Activated CD4-positive, alpha-beta T cell treated with anti-CD3 and anti-CD28 coated beads for 36 hours (primary cell): ENCODE measurements at regions of chr20 and their contacts with region 1.

Region 1: GRCh38 chr20:58236612-58237330 is 8.3 kb upstream of the ANKRD60 start:
- DNase-seq: peak; percentile 93
- ATAC-seq: peak; percentile 90
- H3K4me3 Mint-ChIP-seq: peak overlapping the region; percentile 81
- H3K27ac Mint-ChIP-seq: peak overlapping the region; percentile 92
- H3K4me1 Mint-ChIP-seq: peaks cover 32% of the 10 kb centered on the region
- H3K27me3 Mint-ChIP-seq: no peaks in the 10 kb centered on the region

Region 2: GRCh38 chr20:58192567-58192966 is 44.2 kb before region 1 on chr20:
- CTCF ChIA-PET with region 1: no interaction called
- POLR2A ChIA-PET with region 1: no interaction called
- intact Hi-C with region 1: no loop called
- DNase-seq: peak; percentile 64
- ATAC-seq: no peak
- H3K4me3 Mint-ChIP-seq: no peak overlapping the region
- H3K27ac Mint-ChIP-seq: no peak overlapping the region
- H3K4me1 Mint-ChIP-seq: no peaks in the 10 kb centered on the region
- H3K27me3 Mint-ChIP-seq: peaks cover 6% of the 10 kb centered on the region

Region 3: GRCh38 chr20:58224974-58225373 is 11.8 kb before region 1 on chr20:
- CTCF ChIA-PET with region 1: interaction called, 18 read pairs
- POLR2A ChIA-PET with region 1: interaction called, 3 read pairs
- intact Hi-C with region 1: no loop called
- DNase-seq: no peak
- ATAC-seq: no peak
- H3K4me3 Mint-ChIP-seq: no peak overlapping the region
- H3K27ac Mint-ChIP-seq: no peak overlapping the region
- H3K4me1 Mint-ChIP-seq: peaks cover 31% of the 10 kb centered on the region
- H3K27me3 Mint-ChIP-seq: peaks cover 53% of the 10 kb centered on the region

Region 4: GRCh38 chr20:58407966-58408557 is 171.3 kb after region 1 on chr20:
- CTCF ChIA-PET with region 1: interaction called, 4 read pairs
- POLR2A ChIA-PET with region 1: no interaction called
- intact Hi-C with region 1: loop called in 1 of 2 experiments (anchors 5 kb)
- DNase-seq: peak; percentile 54
- ATAC-seq: peak; percentile 90
- H3K4me3 Mint-ChIP-seq: peak overlapping the region; percentile 36
- H3K27ac Mint-ChIP-seq: peak overlapping the region; percentile 87
- H3K4me1 Mint-ChIP-seq: peaks cover 32% of the 10 kb centered on the region
- H3K27me3 Mint-ChIP-seq: no peaks in the 10 kb centered on the region

Region 5: DNA sequence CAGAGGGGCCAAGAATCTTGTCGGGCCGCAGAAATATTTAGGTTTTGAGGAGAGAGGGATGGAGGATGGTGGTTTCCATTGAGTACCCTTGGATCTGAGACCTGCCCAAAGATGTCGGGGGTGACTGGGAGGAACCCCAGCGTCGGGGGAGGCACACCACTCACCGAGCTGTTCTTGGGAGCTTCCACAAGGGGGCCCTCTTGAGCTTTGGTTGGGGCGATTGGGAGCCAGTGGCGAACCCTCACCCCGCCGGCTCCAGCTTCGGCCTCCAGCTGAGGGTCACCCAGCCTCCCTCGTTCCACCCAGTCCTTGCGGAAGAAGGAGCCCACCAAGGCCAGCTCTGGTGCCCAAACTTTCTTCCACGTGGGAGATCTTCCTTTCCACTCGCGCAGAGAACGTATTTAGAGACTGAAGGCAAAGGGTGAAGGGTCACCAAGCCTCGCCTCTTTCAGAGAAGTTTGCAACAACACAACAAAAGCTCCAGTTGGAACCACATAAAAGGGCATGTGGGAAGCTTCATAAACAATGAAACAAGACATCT is 244.8 kb after region 1 on chr20:
- CTCF ChIA-PET with region 1: no interaction called
- POLR2A ChIA-PET with region 1: no interaction called
- intact Hi-C with region 1: loop called in 1 of 2 experiments (anchors 1 kb)
- DNase-seq: peak; percentile 82
- ATAC-seq: peak; percentile 78
- H3K4me3 Mint-ChIP-seq: no peak overlapping the region
- H3K27ac Mint-ChIP-seq: no peak overlapping the region
- H3K4me1 Mint-ChIP-seq: no peaks in the 10 kb centered on the region
- H3K27me3 Mint-ChIP-seq: peaks cover 15% of the 10 kb centered on the region

Region 6: DNA sequence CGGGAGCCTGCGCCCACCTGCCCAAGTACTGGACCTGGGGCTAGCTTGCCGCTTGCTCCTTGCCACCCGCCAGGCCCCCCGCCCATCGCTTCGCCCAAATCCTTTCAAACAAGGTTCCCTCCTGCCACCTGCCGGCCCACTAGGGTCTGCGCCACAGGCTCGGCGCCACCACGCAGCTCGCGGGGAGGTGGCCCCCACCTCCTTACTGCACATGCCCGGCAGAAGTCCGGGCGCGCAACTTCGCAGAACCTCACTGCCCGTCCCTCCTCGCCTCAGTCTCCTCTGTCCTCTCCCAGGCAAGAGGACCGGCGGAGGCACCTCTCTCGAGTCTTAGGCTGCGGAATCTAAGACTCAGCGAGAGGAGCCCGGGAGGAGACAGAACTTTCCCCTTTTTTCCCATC is 602.7 kb after region 1 on chr20:
- CTCF ChIA-PET with region 1: no interaction called
- POLR2A ChIA-PET with region 1: no interaction called
- intact Hi-C with region 1: loop called in 1 of 2 experiments (anchors 10 kb)
- DNase-seq: peak; percentile 75
- ATAC-seq: peak; percentile 58
- H3K4me3 Mint-ChIP-seq: no peak overlapping the region
- H3K27ac Mint-ChIP-seq: no peak overlapping the region
- H3K4me1 Mint-ChIP-seq: peaks cover 8% of the 10 kb centered on the region
- H3K27me3 Mint-ChIP-seq: peaks cover 44% of the 10 kb centered on the region

Region 7: GRCh38 chr20:59149651-59150504 is 913.1 kb after region 1 on chr20:
- CTCF ChIA-PET with region 1: no interaction called
- POLR2A ChIA-PET with region 1: no interaction called
- intact Hi-C with region 1: loop called in 1 of 2 experiments (anchors 10 kb)
- DNase-seq: peak; percentile 82
- ATAC-seq: peak; percentile 42
- H3K4me3 Mint-ChIP-seq: peak overlapping the region; percentile 58
- H3K27ac Mint-ChIP-seq: peak overlapping the region; percentile 95
- H3K4me1 Mint-ChIP-seq: peaks cover 96% of the 10 kb centered on the region
- H3K27me3 Mint-ChIP-seq: no peaks in the 10 kb centered on the region